H1 (cell line): ENCODE measurements at regions of chr1 and their contacts with region 1.

Region 1: DNA sequence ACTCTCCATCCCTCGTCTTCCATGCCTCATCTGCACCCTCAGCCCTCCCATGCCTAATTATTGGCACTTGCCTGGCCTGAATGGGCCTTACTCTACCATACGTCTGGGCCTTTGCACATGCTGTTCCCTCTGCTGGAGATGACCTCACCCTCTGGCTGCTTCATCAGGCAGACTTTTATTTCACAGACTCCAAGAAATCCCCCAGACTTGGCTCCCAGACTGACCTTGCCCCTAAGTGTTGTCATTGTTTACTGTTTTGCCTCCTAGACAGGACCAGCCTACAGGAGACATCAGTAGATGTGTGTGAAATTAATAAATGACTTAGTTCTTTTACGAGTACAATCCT is 5.2 kb upstream of the AHDC1 start:
- DNase-seq: no peak
- H3K4me3 ChIP-seq: no peak overlapping the region
- H3K27ac ChIP-seq: no peak overlapping the region
- H3K4me1 ChIP-seq: peaks cover 15 to 35% (median 22%) of the 10 kb centered on the region in 4 experiments
- H3K27me3 ChIP-seq: no peaks in the 10 kb centered on the region
- CTCF ChIP-seq: no peak
- EP300 ChIP-seq: no peak
- POLR2A ChIP-seq: no peak
- RAD21 ChIP-seq: no peak

Region 2: DNA sequence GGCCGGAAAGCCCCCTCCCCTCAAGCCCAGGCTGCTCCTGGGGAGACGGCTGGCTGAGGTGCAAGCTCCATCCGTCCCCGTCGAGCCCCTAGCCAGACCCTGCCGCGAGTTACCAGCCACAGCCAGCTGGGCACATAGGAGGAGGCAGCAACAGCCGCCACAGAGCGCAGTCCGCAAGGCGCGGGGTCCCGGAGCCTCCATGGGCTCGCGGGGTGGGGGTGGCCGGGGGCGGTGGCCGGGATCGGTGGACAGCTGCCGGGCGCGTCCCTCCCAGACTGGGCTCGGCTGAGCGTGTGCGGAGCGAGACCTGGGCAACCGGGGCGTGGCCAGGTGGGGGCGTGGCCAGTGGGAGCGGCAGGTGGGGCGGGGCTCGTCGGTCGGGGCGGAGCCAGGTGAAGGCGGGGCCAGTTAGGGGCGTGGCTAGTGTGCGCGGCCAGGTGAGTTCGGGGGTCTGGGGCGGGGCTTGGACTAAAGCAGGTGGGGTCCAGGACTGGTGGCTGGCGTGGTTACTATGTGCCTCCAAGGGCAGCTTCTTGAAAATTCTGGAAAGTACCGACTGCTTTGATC is 226.1 kb before region 1 on chr1 and contains the start of gene CD164L2:
- CTCF ChIA-PET with region 1: interaction called, 25 read pairs
- POLR2A ChIA-PET with region 1: no interaction called
- DNase-seq: peak in 1 of 2 experiments; percentile 100
- H3K4me3 ChIP-seq: peak within 1 kb of the TSS; percentile 36 to 74 (median 52)
- H3K27ac ChIP-seq: no peak within 1 kb of the TSS
- H3K4me1 ChIP-seq: peaks cover 0 to 7% (median under 1%) of the 10 kb centered on the region in 4 experiments; a peak in 3 of 7 replicates
- H3K27me3 ChIP-seq: peaks cover 0 to 16% (median 9%) of the 10 kb centered on the region in 4 experiments; a peak in 6 of 7 replicates
- CTCF ChIP-seq: no peak
- EP300 ChIP-seq: no peak
- POLR2A ChIP-seq: peak in 1 of 2 experiments; percentile 54; a peak in 1 of 3 replicates
- RAD21 ChIP-seq: no peak
- total RNA-seq, gene CD164L2: 3.3 and 3.8 TPM in 2 replicates